ENCODE measurements at regions of chr5 and their contacts with region 1.

Region 1: DNA sequence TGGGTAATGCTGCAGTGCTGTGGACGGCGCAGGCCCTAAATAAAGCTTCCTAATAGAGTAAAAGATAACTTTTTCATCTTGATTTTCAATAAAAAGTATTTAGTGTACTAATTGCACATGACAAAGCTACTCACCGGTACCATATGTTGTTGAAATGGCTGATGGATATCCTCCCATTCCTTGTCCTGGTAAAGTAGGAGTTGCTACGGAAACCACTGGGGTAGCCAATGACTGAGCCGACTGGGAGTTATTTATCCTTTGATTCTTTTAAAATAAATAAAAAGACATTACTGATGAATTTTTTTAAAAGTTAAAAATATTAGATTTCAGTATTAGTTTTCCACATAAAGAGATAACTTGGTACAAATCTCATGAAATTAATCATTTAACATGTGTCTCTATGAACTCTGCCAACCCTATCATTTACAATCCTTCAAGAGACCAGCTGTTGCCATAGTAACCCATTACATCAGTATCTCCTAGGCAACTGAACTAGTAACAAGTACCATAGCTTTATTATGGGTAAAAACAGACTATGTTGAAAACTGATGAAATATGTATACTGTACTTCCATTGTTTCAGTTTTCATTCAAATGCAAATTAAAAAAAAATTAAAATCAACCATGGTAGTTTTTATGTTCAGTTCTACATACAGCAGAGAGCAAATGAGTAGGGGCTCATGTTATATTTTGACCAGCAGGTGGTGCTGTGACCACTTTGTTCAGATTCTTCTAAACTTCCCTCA is 153.7 kb downstream of the MEF2C start:
- DNase-seq: peak in 8 of 9 donors; percentile 28 to 64 (median 50)
- ATAC-seq: peak; percentile 81
- H3K4me3 ChIP-seq: no peak overlapping the region
- H3K4me3 Mint-ChIP-seq: no peak overlapping the region
- H3K27ac ChIP-seq: no peak overlapping the region
- H3K27ac Mint-ChIP-seq: no peak overlapping the region
- H3K4me1 ChIP-seq: no peaks in the 10 kb centered on the region
- H3K4me1 Mint-ChIP-seq: peaks cover 3 to 8% (median 4%) of the 10 kb centered on the region in 7 donors
- H3K27me3 ChIP-seq: no peaks in the 10 kb centered on the region
- H3K27me3 Mint-ChIP-seq: peaks cover 8 to 18% (median 17%) of the 10 kb centered on the region in 5 donors

Region 2: DNA sequence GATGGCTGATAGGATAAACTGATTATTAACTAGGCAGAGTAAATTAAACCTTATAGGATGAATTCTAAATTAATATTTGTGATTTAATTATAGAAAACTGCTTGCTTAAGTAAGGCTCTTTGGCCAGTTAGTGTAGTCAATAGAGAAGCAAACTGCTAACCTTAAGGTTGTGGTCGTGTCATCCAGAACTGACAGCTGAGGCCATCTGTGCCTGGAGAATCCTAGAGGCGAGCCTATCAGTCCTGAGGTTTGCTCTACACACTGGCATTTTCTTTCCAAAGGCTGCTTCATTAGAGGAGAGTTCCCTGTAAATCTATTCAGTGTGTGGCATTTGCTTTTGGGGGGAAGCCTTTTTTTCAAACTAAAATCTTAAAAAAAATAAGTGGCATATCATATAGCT is 15.4 kb before region 1 on chr5:
- CTCF ChIA-PET with region 1: interaction called, 10 read pairs
- POLR2A ChIA-PET with region 1: no interaction called
- intact Hi-C with region 1: no loop called
- DNase-seq: no peak
- ATAC-seq: no peak
- H3K4me3 ChIP-seq: no peak overlapping the region
- H3K4me3 Mint-ChIP-seq: no peak overlapping the region
- H3K27ac ChIP-seq: no peak overlapping the region
- H3K27ac Mint-ChIP-seq: no peak overlapping the region
- H3K4me1 ChIP-seq: no peaks in the 10 kb centered on the region
- H3K4me1 Mint-ChIP-seq: no peaks in the 10 kb centered on the region
- H3K27me3 ChIP-seq: no peaks in the 10 kb centered on the region
- H3K27me3 Mint-ChIP-seq: peaks cover 13 to 38% (median 30%) of the 10 kb centered on the region in 5 donors

Region 3: DNA sequence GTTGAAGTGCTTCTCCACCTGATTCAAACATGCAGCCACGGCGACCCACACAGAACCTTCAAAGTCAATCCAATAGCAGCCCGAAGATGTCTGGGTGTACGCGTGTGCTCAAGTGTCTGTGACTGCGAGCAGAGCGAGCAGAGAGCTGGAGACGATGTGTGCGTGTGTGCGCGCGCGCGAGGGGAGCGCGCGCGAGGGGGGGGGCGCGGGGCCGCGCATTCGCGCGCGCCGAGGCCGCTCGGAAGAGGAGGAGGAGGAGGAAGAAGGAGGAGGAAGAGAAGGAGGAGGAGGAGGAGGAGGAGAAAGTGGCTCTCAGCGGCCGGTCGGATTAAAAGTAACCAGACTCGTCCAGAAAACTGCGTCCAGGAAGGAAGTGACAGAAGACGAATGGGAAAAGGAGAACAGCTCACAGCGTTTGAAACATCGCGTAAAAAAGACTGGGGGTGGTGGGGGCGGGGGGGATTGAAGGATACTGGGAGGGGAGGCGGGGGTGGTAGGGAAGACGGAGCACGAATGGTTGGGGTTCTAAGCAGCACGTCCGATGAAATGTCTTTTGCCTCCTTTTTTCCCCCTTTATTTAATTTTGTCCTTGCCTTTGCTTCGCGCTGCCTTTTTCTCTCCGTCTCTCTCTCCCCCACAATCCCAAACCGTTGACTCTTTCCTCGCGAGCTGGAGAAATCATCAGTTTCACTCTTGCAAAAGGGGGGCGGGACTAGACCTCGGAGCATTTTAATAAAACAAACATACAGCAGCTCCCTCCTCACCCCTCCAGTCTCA is 154.0 kb after region 1 on chr5 and contains the start of gene MEF2C:
- CTCF ChIA-PET with region 1: no interaction called
- POLR2A ChIA-PET with region 1: no interaction called
- intact Hi-C with region 1: loop called in 1 of 2 experiments (anchors 5 kb)
- DNase-seq: no peak
- ATAC-seq: peak; percentile 75
- H3K4me3 ChIP-seq: peak within 1 kb of the TSS; percentile 41
- H3K4me3 Mint-ChIP-seq: peak within 1 kb of the TSS; percentile 82 to 94 (median 88)
- H3K27ac ChIP-seq: no peak within 1 kb of the TSS
- H3K27ac Mint-ChIP-seq: peak within 1 kb of the TSS in 1 of 9 donors; percentile 24
- H3K4me1 ChIP-seq: peaks cover 0 to 6% of the 10 kb centered on the region in 2 donors
- H3K4me1 Mint-ChIP-seq: peaks cover 17 to 29% (median 26%) of the 10 kb centered on the region in 7 donors
- H3K27me3 ChIP-seq: peaks cover 0 to 5% of the 10 kb centered on the region in 2 donors
- H3K27me3 Mint-ChIP-seq: peaks cover 34 to 81% (median 44%) of the 10 kb centered on the region in 5 donors
- total RNA-seq, gene MEF2C: 0.07 to 40.0 (median 3.4) TPM

Region 4: DNA sequence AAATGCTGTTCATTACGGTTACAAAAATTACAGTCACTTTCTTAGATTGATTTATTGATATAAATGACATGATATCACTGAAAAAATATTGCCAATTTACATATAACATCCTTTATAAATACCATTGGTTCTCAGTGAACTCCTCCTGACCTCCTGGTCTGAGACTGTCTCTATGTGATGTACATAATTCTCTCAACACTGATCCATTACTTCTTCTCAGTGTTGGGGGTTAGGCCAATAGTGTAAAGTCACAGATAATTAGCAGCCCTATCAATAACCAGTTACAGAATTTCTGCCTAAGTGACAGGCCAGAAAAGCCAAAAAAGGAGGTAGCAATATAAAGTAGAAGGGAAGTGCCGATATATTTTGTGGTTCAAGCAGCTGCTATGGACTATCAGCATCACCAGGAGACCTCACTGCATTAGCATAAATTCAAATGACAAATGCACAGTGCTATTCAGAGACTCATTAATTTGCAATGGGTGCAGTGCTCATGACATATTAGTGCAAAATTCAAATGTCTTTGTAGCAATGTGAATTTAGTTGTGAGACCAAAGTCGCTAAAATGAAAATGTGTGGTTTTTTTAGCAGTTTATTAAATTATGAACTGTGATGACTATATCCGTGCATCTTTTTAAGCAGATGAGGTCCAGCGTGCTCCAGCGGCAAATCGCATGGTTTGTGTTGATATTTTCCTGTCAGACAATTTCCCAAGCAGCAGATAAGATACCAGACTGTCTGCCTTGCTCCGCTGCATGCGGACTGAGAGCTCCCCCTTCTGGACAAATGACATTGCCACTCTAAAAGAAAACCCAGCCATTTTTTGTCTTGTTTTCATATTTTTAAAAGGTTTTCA is 1535.7 kb after region 1 on chr5:
- CTCF ChIA-PET with region 1: interaction called, 23 read pairs
- POLR2A ChIA-PET with region 1: no interaction called
- intact Hi-C with region 1: loop called (anchors 1 kb)
- DNase-seq: peak; percentile 0 to 46 (median 30)
- ATAC-seq: peak; percentile 59
- H3K4me3 ChIP-seq: no peak overlapping the region
- H3K4me3 Mint-ChIP-seq: no peak overlapping the region
- H3K27ac ChIP-seq: no peak overlapping the region
- H3K27ac Mint-ChIP-seq: no peak overlapping the region
- H3K4me1 ChIP-seq: no peaks in the 10 kb centered on the region
- H3K4me1 Mint-ChIP-seq: peaks cover 0 to 3% (median 0%) of the 10 kb centered on the region in 7 donors
- H3K27me3 ChIP-seq: no peaks in the 10 kb centered on the region
- H3K27me3 Mint-ChIP-seq: peaks cover 0 to 4% (median 0%) of the 10 kb centered on the region in 5 donors

Region 5: GRCh38 chr5:90386099-90386710 is 1656.9 kb after region 1 on chr5:
- CTCF ChIA-PET with region 1: interaction called, 3 read pairs
- POLR2A ChIA-PET with region 1: no interaction called
- intact Hi-C with region 1: loop called (anchors 2 kb)
- DNase-seq: peak in 3 of 9 donors; percentile 2 to 12 (median 10)
- ATAC-seq: no peak
- H3K4me3 ChIP-seq: no peak overlapping the region
- H3K4me3 Mint-ChIP-seq: no peak overlapping the region
- H3K27ac ChIP-seq: no peak overlapping the region
- H3K27ac Mint-ChIP-seq: no peak overlapping the region
- H3K4me1 ChIP-seq: no peaks in the 10 kb centered on the region
- H3K4me1 Mint-ChIP-seq: peaks cover 0 to 16% (median 9%) of the 10 kb centered on the region in 7 donors
- H3K27me3 ChIP-seq: no peaks in the 10 kb centered on the region
- H3K27me3 Mint-ChIP-seq: peaks cover 0 to 11% (median 4%) of the 10 kb centered on the region in 5 donors

Measured in naive thymus-derived CD4-positive, alpha-beta T cell (primary cell).